ENCODE measurements at regions of chr11 and their contacts with region 1.

Region 1: GRCh38 chr11:7571640-7572000 is 57.8 kb downstream of the PPFIBP2 start:
- DNase-seq: peak; percentile 51 to 93 (median 79)

Region 2: GRCh38 chr11:7665473-7666291 is 94.1 kb after region 1 on chr11:
- intact Hi-C with region 1: loop called (anchors 5 kb)
- DNase-seq: peak in 40 of 42 donors; percentile 51 to 88 (median 74)